Sigmoid colon (tissue), 7 donors: ENCODE measurements at regions of chr2 and their contacts with region 1.

Region 1: DNA sequence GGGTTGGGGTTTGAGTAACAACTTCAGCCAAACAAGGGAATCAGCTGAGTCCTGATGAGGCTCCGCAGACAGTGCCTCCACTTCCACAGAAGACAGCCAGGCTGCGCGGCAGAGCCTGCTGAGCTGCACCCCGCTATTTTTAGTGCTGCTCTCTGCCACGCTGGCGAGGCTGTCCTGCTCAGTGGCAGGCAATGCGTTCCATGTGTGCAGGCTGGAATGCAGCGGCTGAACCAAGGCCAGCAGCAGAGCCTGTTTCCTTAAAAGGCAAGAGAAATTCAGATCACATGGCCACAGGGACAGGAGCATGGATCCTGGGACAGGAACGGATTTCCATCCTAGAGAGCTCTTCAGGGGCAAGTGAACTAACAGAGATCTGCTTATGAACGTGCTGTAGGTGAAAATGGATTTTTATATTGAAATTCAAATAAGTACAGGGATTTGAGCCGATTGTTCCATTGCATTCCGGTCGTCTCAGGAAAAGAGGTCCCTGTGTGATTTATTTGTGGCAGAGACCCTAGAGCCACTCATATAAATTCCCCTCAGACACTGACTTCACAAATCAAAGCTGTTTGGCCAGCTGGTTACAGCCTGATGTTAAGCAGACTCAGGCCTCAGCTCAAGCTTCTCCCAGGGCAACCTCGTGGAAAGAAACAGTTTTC is 98.7 kb downstream of the COL6A3 start:
- DNase-seq: peak; percentile 99
- H3K4me3 ChIP-seq: no peak overlapping the region
- H3K27ac ChIP-seq: peak overlapping the region; percentile 91 to 98 (median 95)
- H3K4me1 ChIP-seq: peaks cover 0 to 94% (median 72%) of the 10 kb centered on the region in 4 donors
- H3K27me3 ChIP-seq: no peaks in the 10 kb centered on the region
- CTCF ChIP-seq: peak; percentile 62 to 74 (median 67)
- EP300 ChIP-seq: peak; percentile 81 to 97 (median 94)
- POLR2A ChIP-seq: peak in 1 of 2 donors; percentile 16

Region 2: DNA sequence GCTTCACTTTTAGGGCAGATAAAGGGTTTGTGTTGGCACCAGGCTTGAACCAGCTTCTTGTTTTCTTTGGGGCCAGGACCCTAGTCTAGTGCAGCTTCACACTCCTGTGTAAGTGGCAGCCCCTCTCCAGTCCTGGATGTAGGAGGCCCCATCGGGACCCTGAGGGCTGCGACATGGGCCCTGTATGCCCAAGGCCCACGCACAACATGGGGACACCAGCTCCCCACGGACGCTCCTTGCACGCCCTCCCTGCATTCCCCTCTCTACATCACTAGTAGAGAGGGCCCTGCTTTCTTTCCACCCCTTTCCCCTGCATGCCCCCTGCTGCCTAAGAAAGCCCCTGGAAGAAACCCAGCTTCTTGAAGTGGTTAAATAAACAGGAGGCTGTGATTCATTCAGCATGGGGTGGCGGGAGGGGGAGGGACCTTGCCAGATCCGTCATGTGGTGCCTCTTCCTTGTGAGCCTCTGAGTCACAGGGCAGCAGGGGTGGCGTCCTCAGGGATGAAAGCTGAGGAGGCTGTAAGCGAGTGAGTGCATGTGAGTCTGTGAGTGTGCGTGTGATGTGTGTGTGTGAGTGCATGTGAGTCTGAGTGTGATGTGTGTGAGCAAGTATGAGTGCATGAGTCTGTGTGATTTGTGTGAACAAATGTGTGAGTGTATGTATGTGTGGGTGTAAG is 187.1 kb before region 1 on chr2:
- intact Hi-C with region 1: loop called (anchors 5 kb)
- DNase-seq: peak; percentile 99
- H3K4me3 ChIP-seq: peak overlapping the region in 2 of 4 donors; percentile 2 to 14
- H3K27ac ChIP-seq: peak overlapping the region; percentile 58 to 93 (median 87)
- H3K4me1 ChIP-seq: peaks cover 0 to 71% (median 54%) of the 10 kb centered on the region in 4 donors
- H3K27me3 ChIP-seq: no peaks in the 10 kb centered on the region
- CTCF ChIP-seq: no peak
- EP300 ChIP-seq: peak in 3 of 4 donors; percentile 88 to 99 (median 89)
- POLR2A ChIP-seq: no peak

Region 3: DNA sequence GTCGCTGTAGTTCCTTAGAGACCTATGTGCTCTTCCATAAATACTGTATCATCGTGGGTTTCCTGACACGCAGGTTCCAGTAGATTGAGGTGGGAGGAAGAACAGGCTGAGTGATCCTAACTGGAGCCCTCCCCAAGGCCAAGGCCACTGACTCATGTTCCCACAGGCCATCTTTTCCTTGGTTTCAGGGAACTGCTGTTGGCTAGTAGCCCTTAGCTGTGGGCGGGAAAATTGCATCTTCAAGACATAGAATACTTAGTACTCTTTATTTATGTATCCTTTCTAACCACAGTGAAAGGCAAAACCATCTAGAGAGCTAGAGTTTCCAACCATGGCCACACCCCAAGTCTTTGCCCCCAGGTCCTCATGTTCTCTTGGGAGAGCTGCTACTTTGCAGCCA is 173.7 kb before region 1 on chr2:
- intact Hi-C with region 1: no loop called
- DNase-seq: no peak
- H3K4me3 ChIP-seq: no peak overlapping the region
- H3K27ac ChIP-seq: peak overlapping the region; percentile 49 to 69 (median 56)
- H3K4me1 ChIP-seq: peaks cover 0 to 12% (median 4%) of the 10 kb centered on the region in 4 donors
- H3K27me3 ChIP-seq: no peaks in the 10 kb centered on the region
- CTCF ChIP-seq: no peak
- EP300 ChIP-seq: no peak
- POLR2A ChIP-seq: no peak

Region 4: DNA sequence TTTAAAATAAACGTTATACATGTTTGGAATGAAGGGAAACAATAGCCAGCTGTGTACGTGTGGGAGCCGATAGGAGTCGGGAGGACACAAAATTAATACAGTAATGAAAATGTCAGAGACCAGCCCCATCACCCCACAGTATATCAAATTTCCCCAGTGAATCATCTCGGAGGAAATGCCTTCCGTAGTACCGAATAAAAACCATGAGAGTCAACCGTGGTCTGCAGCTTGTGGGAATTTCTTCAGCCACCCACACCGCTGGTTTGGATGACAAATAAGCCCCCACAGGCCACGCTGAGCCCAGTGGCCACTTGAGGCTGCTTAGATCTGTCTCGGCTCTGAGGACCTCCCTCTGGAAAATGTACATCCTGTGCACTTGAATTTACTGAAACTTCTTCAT is 35.1 kb before region 1 on chr2:
- intact Hi-C with region 1: loop called (anchors 5 kb)
- DNase-seq: no peak
- H3K4me3 ChIP-seq: no peak overlapping the region
- H3K27ac ChIP-seq: peak overlapping the region in 3 of 4 donors; percentile 81 to 87 (median 86)
- H3K4me1 ChIP-seq: peaks cover 0 to 58% (median 54%) of the 10 kb centered on the region in 4 donors
- H3K27me3 ChIP-seq: no peaks in the 10 kb centered on the region
- CTCF ChIP-seq: no peak
- EP300 ChIP-seq: no peak
- POLR2A ChIP-seq: no peak

Region 5: GRCh38 chr2:237298151-237299118 is 16.9 kb before region 1 on chr2:
- intact Hi-C with region 1: loop called (anchors 2 kb)
- DNase-seq: no peak
- H3K4me3 ChIP-seq: no peak overlapping the region
- H3K27ac ChIP-seq: peak overlapping the region; percentile 11 to 90 (median 86)
- H3K4me1 ChIP-seq: peaks cover 0 to 76% (median 58%) of the 10 kb centered on the region in 4 donors
- H3K27me3 ChIP-seq: no peaks in the 10 kb centered on the region
- CTCF ChIP-seq: no peak
- EP300 ChIP-seq: peak in 3 of 4 donors; percentile 11 to 60 (median 44)
- POLR2A ChIP-seq: no peak

Region 6: GRCh38 chr2:237413777-237414661 is 98.7 kb after region 1 on chr2 and contains the start of gene COL6A3:
- intact Hi-C with region 1: loop called (anchors 1 kb)
- DNase-seq: peak; percentile 94
- H3K4me3 ChIP-seq: peak within 1 kb of the TSS; percentile 53 to 81 (median 74)
- H3K27ac ChIP-seq: peak within 1 kb of the TSS; percentile 84 to 96 (median 94)
- H3K4me1 ChIP-seq: peaks cover 0 to 19% (median 6%) of the 10 kb centered on the region in 4 donors
- H3K27me3 ChIP-seq: no peaks in the 10 kb centered on the region
- CTCF ChIP-seq: no peak
- EP300 ChIP-seq: no peak
- POLR2A ChIP-seq: peak; percentile 53 to 56
- total RNA-seq, gene COL6A3: 233 to 715 (median 381) TPM